ENCODE measurements at regions of chr21 and their contacts with region 1.

Region 1: GRCh38 chr21:17688912-17689874 is 76.5 kb upstream of the BTG3 start:
- DNase-seq: peak in 1 of 2 experiments; percentile 59
- ATAC-seq: peak; percentile 47 to 72; a peak in 4 of 6 replicates
- H3K4me3 ChIP-seq: no peak overlapping the region
- H3K27ac ChIP-seq: peak overlapping the region; percentile 35 to 59; a peak in 4 of 6 replicates
- H3K4me1 ChIP-seq: 0 out of 3 replicates have a peak, but pooled peaks cover 8% of the 10 kb centered on the region
- CTCF ChIP-seq: peak; percentile 9; the same call in 1 of the 3 replicates
- EP300 ChIP-seq: no peak
- POLR2A ChIP-seq: no peak
- RAD21 ChIP-seq: no peak

Region 2: DNA sequence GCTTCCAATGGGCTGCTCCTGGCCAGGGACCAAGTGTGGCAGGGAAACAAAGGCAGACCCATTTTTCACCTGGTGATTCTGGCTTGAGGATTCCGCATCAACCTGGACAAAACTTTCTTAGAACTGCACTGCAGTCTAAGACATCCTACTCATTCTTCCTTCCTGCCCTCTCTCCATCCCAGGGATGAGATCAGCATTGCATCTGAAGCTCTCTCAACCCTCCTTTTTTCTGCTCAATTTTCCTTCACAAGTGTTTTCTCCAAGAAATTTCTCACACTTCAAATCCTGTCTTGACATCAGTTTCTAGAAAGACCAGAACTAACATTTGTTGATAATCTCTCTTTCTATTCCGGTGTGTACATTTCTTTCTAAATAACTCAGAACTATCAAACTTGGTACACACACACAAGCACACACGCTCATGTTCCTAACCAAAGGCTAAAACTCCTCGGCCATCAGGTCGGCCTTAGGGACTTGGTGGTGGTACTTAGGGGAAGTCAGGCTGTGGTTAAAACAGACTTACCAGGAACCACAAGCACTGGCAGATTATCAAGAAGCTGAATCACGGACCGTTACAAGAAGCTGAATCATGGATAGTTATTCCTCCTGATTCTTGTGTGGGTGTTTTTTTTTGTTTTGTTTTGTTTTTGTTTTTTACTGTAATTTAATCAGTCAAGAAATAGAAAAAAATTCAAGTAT is 197.3 kb before region 1 on chr21:
- CTCF ChIA-PET with region 1: no interaction called
- POLR2A ChIA-PET with region 1: no interaction called
- DNase-seq: peak; percentile 7 to 56
- ATAC-seq: peak; percentile 67 to 79; a peak in 4 of 6 replicates
- H3K4me3 ChIP-seq: no peak overlapping the region
- H3K27ac ChIP-seq: peak overlapping the region; percentile 53 to 69
- H3K4me1 ChIP-seq: peaks cover 35% of the 10 kb centered on the region
- CTCF ChIP-seq: no peak
- EP300 ChIP-seq: no peak
- POLR2A ChIP-seq: no peak
- RAD21 ChIP-seq: no peak

Region 3: DNA sequence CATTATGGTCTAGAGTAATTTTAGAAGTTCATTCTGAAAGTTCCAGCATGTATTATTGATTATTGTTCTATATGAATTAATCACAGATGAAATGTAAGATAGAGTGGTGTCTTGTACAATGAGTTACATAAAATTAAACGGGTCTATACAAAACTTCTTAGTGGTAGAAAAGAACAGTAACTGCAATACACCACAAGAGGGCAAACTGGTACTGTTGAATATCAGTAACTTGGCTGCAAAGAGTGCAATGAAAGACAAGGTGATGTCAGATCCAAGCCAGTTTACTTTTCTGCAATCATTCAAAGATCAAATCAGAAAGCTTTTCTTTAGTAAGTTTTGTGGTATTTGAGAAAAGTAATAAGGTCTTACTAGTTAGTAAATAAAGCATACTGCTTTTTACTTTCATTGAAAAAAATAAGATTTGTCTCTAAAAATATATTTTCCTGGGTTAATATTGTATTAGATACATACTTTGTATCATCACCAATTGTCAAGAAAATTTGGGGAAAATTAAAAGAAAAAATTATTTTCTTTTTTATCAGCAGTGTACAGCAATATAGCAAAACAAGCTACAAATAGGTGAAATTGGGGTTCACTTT is 10.1 kb before region 1 on chr21:
- CTCF ChIA-PET with region 1: interaction called, 10 read pairs
- POLR2A ChIA-PET with region 1: no interaction called
- DNase-seq: peak; percentile 14 to 56
- ATAC-seq: peak; percentile 79 to 81; a peak in 5 of 6 replicates
- H3K4me3 ChIP-seq: no peak overlapping the region
- H3K27ac ChIP-seq: no peak overlapping the region
- H3K4me1 ChIP-seq: no peaks in the 10 kb centered on the region
- CTCF ChIP-seq: peak; percentile 63
- EP300 ChIP-seq: no peak
- POLR2A ChIP-seq: no peak
- RAD21 ChIP-seq: peak; percentile 65 to 70

Region 4: GRCh38 chr21:17732306-17732705 is 43.1 kb after region 1 on chr21:
- CTCF ChIA-PET with region 1: no interaction called
- POLR2A ChIA-PET with region 1: no interaction called
- DNase-seq: no peak
- ATAC-seq: no peak
- H3K4me3 ChIP-seq: no peak overlapping the region
- H3K27ac ChIP-seq: no peak overlapping the region
- H3K4me1 ChIP-seq: no peaks in the 10 kb centered on the region
- CTCF ChIP-seq: no peak
- EP300 ChIP-seq: no peak
- POLR2A ChIP-seq: no peak
- RAD21 ChIP-seq: no peak